ENCODE measurements at regions of chr6 and their contacts with region 1.

Region 1: GRCh38 chr6:7232351-7232750 is 80.6 kb downstream of the SSR1 start:
- DNase-seq: peak in 2 of 5 donors; percentile 60 to 67
- H3K4me3 ChIP-seq: no peak overlapping the region
- H3K27ac ChIP-seq: no peak overlapping the region
- H3K4me1 ChIP-seq: peaks cover 4% of the 10 kb centered on the region
- H3K27me3 ChIP-seq: no peaks in the 10 kb centered on the region
- CTCF ChIP-seq: no peak
- EP300 ChIP-seq: no peak
- POLR2A ChIP-seq: no peak

Region 2: GRCh38 chr6:7098993-7099392 is 133.4 kb before region 1 on chr6:
- intact Hi-C with region 1: loop called in 1 of 4 experiments (anchors 5 kb)
- DNase-seq: no peak
- H3K4me3 ChIP-seq: no peak overlapping the region
- H3K27ac ChIP-seq: no peak overlapping the region
- H3K4me1 ChIP-seq: no peaks in the 10 kb centered on the region
- H3K27me3 ChIP-seq: no peaks in the 10 kb centered on the region
- CTCF ChIP-seq: no peak
- EP300 ChIP-seq: no peak
- POLR2A ChIP-seq: no peak

Region 3: GRCh38 chr6:7282097-7282906 is 50.0 kb after region 1 on chr6:
- intact Hi-C with region 1: no loop called
- DNase-seq: no peak
- H3K4me3 ChIP-seq: no peak overlapping the region
- H3K27ac ChIP-seq: no peak overlapping the region
- H3K4me1 ChIP-seq: no peaks in the 10 kb centered on the region
- H3K27me3 ChIP-seq: no peaks in the 10 kb centered on the region
- CTCF ChIP-seq: no peak
- EP300 ChIP-seq: no peak
- POLR2A ChIP-seq: no peak

Measured in ovary (tissue), 10 donors.